Transverse colon (tissue), 4 donors: ENCODE measurements at regions of chr21 and their contacts with region 1.

Region 1: GRCh38 chr21:44267655-44268142 is 6.0 kb upstream of the DNMT3L start:
- DNase-seq: peak; percentile 32
- H3K4me3 ChIP-seq: no peak overlapping the region
- H3K27ac ChIP-seq: no peak overlapping the region
- H3K4me1 ChIP-seq: no peaks in the 10 kb centered on the region
- H3K27me3 ChIP-seq: no peaks in the 10 kb centered on the region
- CTCF ChIP-seq: peak in 2 of 5 experiments; percentile 12 to 25
- EP300 ChIP-seq: no peak
- POLR2A ChIP-seq: no peak

Region 2: DNA sequence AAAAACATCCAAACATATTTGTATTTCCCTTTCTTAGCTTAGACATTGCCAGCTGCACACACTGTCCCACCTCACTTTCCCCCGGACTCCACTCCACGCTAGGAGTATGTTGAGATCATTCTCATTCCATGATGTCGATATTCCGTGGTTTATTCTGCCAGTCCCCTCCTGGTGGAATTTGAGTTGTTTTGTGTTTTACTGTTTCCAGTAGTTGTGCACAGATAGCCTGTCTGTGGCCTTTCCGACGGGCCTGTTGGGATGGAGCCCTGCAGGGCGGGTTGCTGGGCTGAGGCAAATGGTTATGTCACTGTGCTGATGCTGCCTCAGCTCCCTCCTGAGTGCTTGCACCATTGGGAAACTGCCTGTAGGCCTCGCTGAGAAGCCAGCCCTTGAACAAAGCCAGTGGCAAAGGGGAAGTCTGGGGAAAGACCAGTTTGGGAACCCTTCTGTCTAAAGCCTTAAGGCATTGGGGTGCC is 242.8 kb before region 1 on chr21:
- in situ Hi-C with region 1: loop called in 1 of 4 experiments (anchors 25 kb)
- intact Hi-C with region 1: no loop called
- DNase-seq: peak; percentile 17
- H3K4me3 ChIP-seq: no peak overlapping the region
- H3K27ac ChIP-seq: peak overlapping the region; percentile 14 to 60 (median 24)
- H3K4me1 ChIP-seq: peaks cover 0 to 47% (median 22%) of the 10 kb centered on the region in 4 donors
- H3K27me3 ChIP-seq: no peaks in the 10 kb centered on the region
- CTCF ChIP-seq: no peak
- EP300 ChIP-seq: no peak
- POLR2A ChIP-seq: no peak

Region 3: DNA sequence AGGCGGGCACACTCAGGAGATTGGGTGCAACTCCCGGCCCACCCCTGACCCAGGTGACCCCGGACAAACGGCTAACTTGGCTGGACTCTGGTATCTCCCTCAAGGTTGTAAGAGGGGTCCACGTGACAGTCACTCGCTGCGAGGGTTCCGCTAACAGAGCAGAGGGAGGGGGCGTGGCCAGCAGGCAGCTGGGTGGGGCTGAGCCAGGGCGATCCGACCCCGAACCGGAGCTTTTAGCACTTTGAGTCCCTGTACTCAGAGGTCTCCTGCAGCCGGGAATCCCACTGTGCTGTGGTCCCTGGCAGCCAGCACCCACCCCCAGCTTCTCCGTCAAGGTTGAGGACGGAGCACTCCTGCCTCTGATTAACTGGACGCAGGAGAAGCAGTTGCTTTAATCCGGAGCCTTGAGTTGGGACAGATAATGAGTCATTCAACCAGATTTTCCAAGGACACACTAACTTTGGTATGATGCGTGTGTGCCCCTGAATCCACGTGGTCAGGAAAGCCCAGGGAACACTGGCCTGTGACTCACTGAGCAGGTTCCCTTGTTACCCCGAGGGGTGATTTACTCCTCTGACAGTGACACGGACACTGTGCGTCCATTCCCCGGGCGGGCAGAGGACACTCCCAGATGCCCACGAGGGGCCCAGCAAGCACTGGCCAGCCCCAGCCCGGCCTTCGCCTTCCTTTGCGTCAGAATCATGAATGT is 102.5 kb after region 1 on chr21:
- in situ Hi-C with region 1: loop called in 1 of 4 experiments (anchors 25 kb)
- intact Hi-C with region 1: no loop called
- DNase-seq: no peak
- H3K4me3 ChIP-seq: no peak overlapping the region
- H3K27ac ChIP-seq: no peak overlapping the region
- H3K4me1 ChIP-seq: peaks cover 3 to 6% (median 4%) of the 10 kb centered on the region in 4 donors
- H3K27me3 ChIP-seq: peaks cover 32% of the 10 kb centered on the region
- CTCF ChIP-seq: no peak
- EP300 ChIP-seq: no peak
- POLR2A ChIP-seq: no peak

Region 4: DNA sequence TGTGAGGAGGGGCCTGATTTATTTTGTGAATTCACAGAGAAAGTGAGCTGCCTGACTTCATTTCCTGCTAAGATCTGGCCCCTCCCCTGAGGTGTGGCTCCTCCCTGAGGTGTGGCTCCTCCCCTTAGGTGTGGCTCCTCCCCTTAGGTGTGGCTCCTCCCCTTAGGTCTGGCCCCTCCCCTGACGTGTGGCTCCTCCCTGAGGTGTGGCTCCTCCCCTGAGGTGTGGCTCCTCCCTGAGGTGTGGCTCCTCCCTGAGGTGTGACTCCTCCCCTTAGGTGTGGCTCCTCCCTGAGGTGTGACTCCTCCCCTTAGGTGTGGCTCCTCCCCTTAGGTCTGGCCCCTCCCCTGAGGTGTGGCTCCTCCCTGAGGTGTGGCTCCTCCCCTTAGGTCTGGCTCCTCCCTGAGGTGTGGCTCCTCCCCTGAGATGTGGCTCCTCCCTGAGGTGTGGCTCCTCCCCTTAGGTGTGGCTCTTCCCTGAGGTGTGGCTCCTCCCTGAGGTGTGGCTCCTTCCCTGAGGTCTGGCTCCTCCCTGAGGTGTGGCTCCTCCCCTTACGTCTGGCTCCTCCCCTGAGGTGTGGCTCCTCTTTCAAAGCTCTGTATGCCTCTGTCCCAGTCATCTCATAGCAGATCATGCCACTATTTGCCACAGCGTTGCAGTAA is 160.7 kb after region 1 on chr21:
- in situ Hi-C with region 1: no loop called
- intact Hi-C with region 1: no loop called
- DNase-seq: peak; percentile 80
- H3K4me3 ChIP-seq: no peak overlapping the region
- H3K27ac ChIP-seq: peak overlapping the region in 2 of 4 donors; percentile 8 to 28
- H3K4me1 ChIP-seq: no peaks in the 10 kb centered on the region
- H3K27me3 ChIP-seq: no peaks in the 10 kb centered on the region
- CTCF ChIP-seq: no peak
- EP300 ChIP-seq: no peak
- POLR2A ChIP-seq: no peak